OCI-LY7 (cell line): ENCODE measurements at regions of chr2 and their contacts with region 1.

Region 1: DNA sequence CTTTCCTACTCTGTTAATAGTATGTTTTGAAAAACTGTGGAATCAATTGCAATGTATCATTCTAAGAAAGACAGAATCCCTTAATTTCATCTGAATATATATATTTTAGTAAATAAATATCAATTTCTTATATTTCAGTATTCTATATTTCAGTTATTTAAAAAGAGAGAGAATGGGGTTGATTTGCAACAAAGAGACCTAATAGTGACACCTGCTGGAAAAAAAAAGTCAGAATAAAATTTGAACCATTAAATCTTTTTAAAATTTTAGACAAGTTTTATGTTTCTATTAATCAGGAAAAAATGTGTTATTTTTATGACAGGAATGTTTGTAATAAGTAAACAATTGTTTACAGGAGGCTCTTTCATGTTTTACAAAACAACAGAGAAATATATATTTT is 20.7 kb upstream of the CCNT2 start:
- DNase-seq: peak; percentile 26
- H3K4me3 ChIP-seq: no peak overlapping the region
- H3K27ac ChIP-seq: no peak overlapping the region
- H3K4me1 ChIP-seq: no peaks in the 10 kb centered on the region
- CTCF ChIP-seq: peak; percentile 80

Region 2: GRCh38 chr2:134460583-134460998 is 437.3 kb before region 1 on chr2:
- CTCF ChIA-PET with region 1: no interaction called
- POLR2A ChIA-PET with region 1: no interaction called
- intact Hi-C with region 1: loop called (anchors 1 kb)
- DNase-seq: peak; percentile 70
- H3K4me3 ChIP-seq: no peak overlapping the region
- H3K27ac ChIP-seq: no peak overlapping the region
- H3K4me1 ChIP-seq: no peaks in the 10 kb centered on the region
- CTCF ChIP-seq: peak; percentile 78

Region 3: DNA sequence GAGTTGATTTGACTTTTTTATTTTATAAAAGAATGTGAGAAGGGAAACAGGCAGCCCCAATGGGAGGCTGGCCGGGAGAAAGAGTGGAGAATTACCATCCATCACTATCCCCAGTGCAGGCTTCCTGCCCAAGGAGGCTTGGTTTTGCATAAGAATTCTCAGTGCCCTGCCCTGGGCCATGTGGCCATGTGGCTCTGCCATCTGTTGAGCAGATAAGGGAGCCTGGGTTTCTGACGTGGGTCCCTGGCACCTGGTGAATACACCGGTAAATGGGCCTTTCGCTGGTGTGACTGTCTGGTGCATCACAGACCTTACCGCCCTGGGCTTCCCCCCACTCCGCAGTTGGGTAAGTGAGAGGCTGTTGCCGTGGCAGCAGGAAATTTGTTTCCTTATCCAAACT is 124.6 kb before region 1 on chr2:
- CTCF ChIA-PET with region 1: no interaction called
- POLR2A ChIA-PET with region 1: no interaction called
- intact Hi-C with region 1: no loop called
- DNase-seq: no peak
- H3K4me3 ChIP-seq: no peak overlapping the region
- H3K27ac ChIP-seq: no peak overlapping the region
- H3K4me1 ChIP-seq: no peaks in the 10 kb centered on the region
- CTCF ChIP-seq: no peak

Region 4: GRCh38 chr2:134943540-134943939 is 45.6 kb after region 1 on chr2:
- CTCF ChIA-PET with region 1: no interaction called
- POLR2A ChIA-PET with region 1: no interaction called
- intact Hi-C with region 1: no loop called
- DNase-seq: peak; percentile 22
- H3K4me3 ChIP-seq: no peak overlapping the region
- H3K27ac ChIP-seq: peak overlapping the region; percentile 18
- H3K4me1 ChIP-seq: peaks cover 17% of the 10 kb centered on the region
- CTCF ChIP-seq: no peak